ENCODE measurements at regions of chr5 and their contacts with region 1.

Region 1: GRCh38 chr5:37005946-37006540 is 129.5 kb downstream of the NIPBL start:
- DNase-seq: peak; percentile 7

Region 2: DNA sequence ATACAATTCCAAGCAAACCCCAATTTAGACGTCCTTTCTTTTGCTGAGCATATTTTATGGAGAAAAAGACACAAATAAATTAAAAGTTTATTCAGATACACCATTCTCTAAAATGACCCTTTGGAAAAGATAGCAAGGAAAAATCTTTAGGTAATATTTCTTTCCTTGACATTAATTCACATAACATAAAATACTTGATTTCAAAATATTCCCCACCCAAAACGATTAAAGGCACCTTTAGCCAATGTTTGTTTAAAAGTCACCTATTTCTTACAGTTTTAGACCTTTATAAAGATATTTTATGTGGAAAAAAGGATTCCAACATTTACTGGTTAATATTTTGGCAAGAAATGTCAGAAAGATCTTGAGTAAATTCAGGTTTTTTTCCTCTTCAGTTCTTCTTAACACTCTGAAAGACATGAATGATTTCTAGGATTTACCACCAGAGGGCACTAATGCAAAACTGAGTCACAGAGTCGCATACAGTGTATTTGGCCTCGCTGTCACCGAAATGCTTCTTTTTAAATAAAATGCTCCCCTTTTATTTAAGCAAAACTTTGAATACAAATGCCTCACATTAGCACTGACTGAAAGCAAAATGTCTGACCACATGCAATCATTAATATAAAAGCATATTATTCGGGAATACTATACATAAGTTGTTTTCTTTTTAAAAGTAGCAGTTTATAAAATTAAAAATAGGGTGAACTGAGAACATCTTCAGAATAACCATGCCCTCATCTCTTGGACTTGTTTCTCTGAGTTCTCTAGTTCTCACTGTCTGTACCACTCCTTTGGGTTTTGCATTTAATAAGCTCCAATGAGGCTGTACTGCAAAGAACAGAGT is 277.1 kb before region 1 on chr5:
- CTCF ChIA-PET with region 1: interaction called, 11 read pairs
- POLR2A ChIA-PET with region 1: no interaction called
- DNase-seq: peak; percentile 59

Region 3: DNA sequence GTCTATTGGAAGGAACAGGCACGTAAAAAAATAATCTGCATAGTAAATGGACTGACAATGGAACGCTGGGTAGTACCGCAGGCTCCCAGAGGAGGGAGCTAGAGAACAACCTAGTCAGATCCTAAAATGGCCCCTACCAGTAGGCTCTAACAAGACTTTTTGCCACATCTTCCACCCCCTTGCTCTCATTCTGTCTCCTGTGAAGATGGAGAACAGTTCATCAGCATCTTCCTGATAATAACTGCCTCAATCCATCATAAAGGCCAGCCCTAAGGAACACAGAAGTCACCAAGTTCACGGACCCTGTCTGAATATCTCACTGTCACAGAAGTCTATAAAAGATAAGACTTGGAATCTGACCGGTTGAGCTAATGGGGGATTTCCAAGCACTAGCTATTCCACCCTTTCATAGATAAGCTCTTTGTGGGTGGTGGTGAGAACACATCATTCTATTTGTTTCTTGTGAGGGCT is 266.3 kb before region 1 on chr5:
- CTCF ChIA-PET with region 1: interaction called, 13 read pairs
- POLR2A ChIA-PET with region 1: no interaction called
- DNase-seq: peak; percentile 70

Region 4: GRCh38 chr5:37146896-37147295 is 140.9 kb after region 1 on chr5:
- CTCF ChIA-PET with region 1: no interaction called
- POLR2A ChIA-PET with region 1: no interaction called
- DNase-seq: no peak

Measured in HEK293T (cell line).